ENCODE measurements at regions of chr3 and their contacts with region 1.

Region 1: GRCh38 chr3:37024092-37024491 is 30.8 kb downstream of the MLH1 start:
- DNase-seq: no peak
- H3K4me3 ChIP-seq: no peak overlapping the region
- H3K27ac ChIP-seq: no peak overlapping the region
- H3K4me1 ChIP-seq: peaks cover 0 to 5% of the 10 kb centered on the region in 2 donors
- H3K27me3 ChIP-seq: no peaks in the 10 kb centered on the region
- CTCF ChIP-seq: peak; percentile 26 to 59 (median 49)
- POLR2A ChIP-seq: no peak

Region 2: GRCh38 chr3:37210230-37210629 is 186.1 kb after region 1 on chr3:
- intact Hi-C with region 1: loop called (anchors 5 to 10 kb)
- DNase-seq: no peak
- H3K4me3 ChIP-seq: no peak overlapping the region
- H3K27ac ChIP-seq: no peak overlapping the region
- H3K4me1 ChIP-seq: no peaks in the 10 kb centered on the region
- H3K27me3 ChIP-seq: no peaks in the 10 kb centered on the region
- CTCF ChIP-seq: no peak
- POLR2A ChIP-seq: no peak

Region 3: GRCh38 chr3:38317155-38317759 is 1293.2 kb after region 1 on chr3:
- intact Hi-C with region 1: no loop called
- DNase-seq: peak in 2 of 7 donors; percentile 31 to 36
- H3K4me3 ChIP-seq: no peak overlapping the region
- H3K27ac ChIP-seq: no peak overlapping the region
- H3K4me1 ChIP-seq: no peaks in the 10 kb centered on the region
- H3K27me3 ChIP-seq: no peaks in the 10 kb centered on the region
- CTCF ChIP-seq: no peak
- POLR2A ChIP-seq: no peak